Activated naive CD8-positive, alpha-beta T cell treated with anti-CD3 and anti-CD28 coated beads, Interleukin-2, amount 10 ng/mL, durations not matched to agents 7 days and 5 days (primary cell): ENCODE measurements at regions of chr1 and their contacts with region 1.

Region 1: GRCh38 chr1:32964461-32965250 is at the start of gene RNF19B:
- DNase-seq: peak; percentile 94
- ATAC-seq: peak; percentile 94
- H3K4me3 Mint-ChIP-seq: peak within 1 kb of the TSS; percentile 85
- H3K27ac Mint-ChIP-seq: peak within 1 kb of the TSS; percentile 85
- H3K4me1 Mint-ChIP-seq: peaks cover 27% of the 10 kb centered on the region
- H3K27me3 Mint-ChIP-seq: peaks cover 14% of the 10 kb centered on the region
- total RNA-seq, gene RNF19B: 21.6 to 22.4 TPM

Region 2: GRCh38 chr1:32753532-32754312 is 210.9 kb before region 1 on chr1:
- POLR2A ChIA-PET with region 1: no interaction called
- DNase-seq: peak; percentile 79
- ATAC-seq: peak; percentile 80
- H3K4me3 Mint-ChIP-seq: peak overlapping the region; percentile 13
- H3K27ac Mint-ChIP-seq: no peak overlapping the region
- H3K4me1 Mint-ChIP-seq: peaks cover 5% of the 10 kb centered on the region
- H3K27me3 Mint-ChIP-seq: peaks cover 39% of the 10 kb centered on the region

Region 3: DNA sequence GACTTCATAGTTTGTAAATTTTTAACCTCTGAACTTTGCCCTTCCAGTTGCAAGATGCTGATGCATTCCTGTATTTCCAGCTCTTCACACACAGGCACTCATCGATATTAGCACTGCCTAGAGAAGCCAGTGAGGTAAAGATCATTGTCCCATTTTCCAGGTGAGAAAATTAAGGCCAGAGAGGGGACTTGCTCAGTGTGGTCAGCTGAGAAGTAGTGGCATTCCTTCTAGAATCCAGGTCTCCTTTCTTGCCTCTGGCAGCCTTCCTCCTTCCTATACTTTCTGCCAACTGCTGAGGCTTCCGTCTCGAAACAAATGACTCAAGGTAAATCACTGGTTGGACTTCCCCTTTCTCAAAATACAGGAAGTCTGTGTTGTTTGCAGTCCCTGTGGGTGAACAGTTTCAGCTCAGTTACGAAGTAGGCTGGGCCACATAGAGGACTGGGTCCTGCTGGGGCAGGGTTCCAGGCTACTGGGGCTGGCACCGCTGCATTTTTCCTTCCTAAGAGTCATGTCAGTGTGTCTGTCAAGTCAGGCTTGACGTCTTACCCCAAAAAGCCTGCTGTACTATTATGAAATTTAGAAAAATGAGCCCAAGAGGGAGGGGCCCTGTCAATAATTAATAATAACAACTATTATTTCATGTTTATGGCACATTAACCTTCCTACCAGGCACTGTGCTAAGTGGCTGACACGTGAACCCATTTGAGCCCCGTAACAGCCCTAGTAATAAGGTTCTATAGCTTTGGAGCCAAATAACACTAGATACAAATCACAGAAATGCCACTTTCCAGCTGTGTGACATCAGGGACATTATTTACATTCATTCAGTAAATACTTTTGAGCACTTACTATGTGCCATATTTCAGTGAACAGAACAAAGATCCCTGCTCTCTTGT is 16.6 kb after region 1 on chr1:
- POLR2A ChIA-PET with region 1: interaction called, 36 read pairs
- DNase-seq: no peak
- ATAC-seq: peak; percentile 98
- H3K4me3 Mint-ChIP-seq: peak overlapping the region; percentile 78
- H3K27ac Mint-ChIP-seq: peak overlapping the region; percentile 93
- H3K4me1 Mint-ChIP-seq: peaks cover 35% of the 10 kb centered on the region
- H3K27me3 Mint-ChIP-seq: peaks cover 3% of the 10 kb centered on the region

Region 4: GRCh38 chr1:32992489-32993323 is 28.1 kb after region 1 on chr1:
- POLR2A ChIA-PET with region 1: interaction called, 10 read pairs
- DNase-seq: peak; percentile 52
- ATAC-seq: peak; percentile 77
- H3K4me3 Mint-ChIP-seq: no peak overlapping the region
- H3K27ac Mint-ChIP-seq: peak overlapping the region; percentile 35
- H3K4me1 Mint-ChIP-seq: peaks cover 42% of the 10 kb centered on the region
- H3K27me3 Mint-ChIP-seq: peaks cover 1% of the 10 kb centered on the region